CD14-positive monocyte (primary cell): ENCODE measurements at regions of chr13 and their contacts with region 1.

Region 1: DNA sequence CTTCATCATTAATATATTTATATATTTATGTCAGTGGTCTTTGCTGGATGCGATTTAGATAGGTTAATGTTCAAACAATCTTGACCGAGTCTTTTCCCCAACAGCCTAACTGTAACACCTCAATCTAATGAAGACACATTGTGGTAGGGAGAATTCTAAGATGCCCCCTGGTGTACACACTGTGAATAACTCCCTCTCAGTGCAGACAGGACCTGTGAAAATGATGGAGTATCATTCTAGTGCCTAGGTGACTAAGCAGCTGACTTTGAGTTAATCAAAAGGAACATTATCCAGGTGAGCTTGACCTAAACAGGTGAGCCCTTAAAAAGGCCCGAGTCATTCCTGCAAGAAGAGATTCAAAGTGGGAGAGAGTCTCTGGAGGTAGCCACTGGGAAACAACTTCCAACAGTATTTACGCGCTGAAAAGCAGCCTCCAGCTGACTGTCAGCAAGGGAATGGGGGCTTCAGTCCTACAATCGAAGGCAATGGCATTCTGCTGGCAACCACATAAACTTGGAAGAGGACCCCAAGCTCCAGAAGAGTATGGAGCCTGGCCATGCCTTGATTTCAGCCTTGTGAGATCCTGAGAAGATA is 28.0 kb upstream of the KBTBD7 start:
- DNase-seq: peak; percentile 28 to 51 (median 50)
- H3K4me3 ChIP-seq: no peak overlapping the region
- H3K4me3 Mint-ChIP-seq: no peak overlapping the region
- H3K27ac ChIP-seq: no peak overlapping the region
- H3K27ac Mint-ChIP-seq: no peak overlapping the region
- H3K4me1 ChIP-seq: no peaks in the 10 kb centered on the region
- H3K4me1 Mint-ChIP-seq: no peaks in the 10 kb centered on the region
- H3K27me3 ChIP-seq: no peaks in the 10 kb centered on the region
- H3K27me3 Mint-ChIP-seq: no peaks in the 10 kb centered on the region
- CTCF ChIP-seq: peak; percentile 86

Region 2: DNA sequence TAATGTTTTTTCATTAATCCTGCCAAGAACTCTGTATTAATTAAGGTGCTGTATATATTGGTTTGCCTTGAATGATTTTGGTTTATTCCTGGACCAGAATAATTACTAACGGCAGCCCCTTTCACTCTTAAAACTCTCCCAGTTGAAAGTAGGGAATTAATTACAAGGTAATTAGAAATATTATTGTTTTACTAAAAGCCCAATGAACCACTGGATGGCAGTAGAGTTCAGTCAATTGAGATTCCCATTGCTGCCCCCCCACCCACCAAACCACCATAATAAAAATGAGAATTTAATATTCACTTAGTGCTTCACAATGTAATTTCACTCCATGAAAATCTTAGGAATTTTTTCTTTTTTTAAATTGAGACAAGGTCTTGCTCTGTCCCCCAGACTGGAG is 147.3 kb before region 1 on chr13:
- intact Hi-C with region 1: loop called (anchors 2 to 10 kb)
- DNase-seq: peak in 2 of 3 donors; percentile 33 to 39
- H3K4me3 ChIP-seq: no peak overlapping the region
- H3K4me3 Mint-ChIP-seq: no peak overlapping the region
- H3K27ac ChIP-seq: no peak overlapping the region
- H3K27ac Mint-ChIP-seq: no peak overlapping the region
- H3K4me1 ChIP-seq: no peaks in the 10 kb centered on the region
- H3K4me1 Mint-ChIP-seq: no peaks in the 10 kb centered on the region
- H3K27me3 ChIP-seq: no peaks in the 10 kb centered on the region
- H3K27me3 Mint-ChIP-seq: peaks cover 0 to 1% (median 0%) of the 10 kb centered on the region in 3 donors
- CTCF ChIP-seq: peak; percentile 69

Region 3: GRCh38 chr13:41271456-41272285 is 49.3 kb after region 1 on chr13:
- intact Hi-C with region 1: no loop called
- DNase-seq: no peak
- H3K4me3 ChIP-seq: no peak overlapping the region
- H3K4me3 Mint-ChIP-seq: no peak overlapping the region
- H3K27ac ChIP-seq: no peak overlapping the region
- H3K27ac Mint-ChIP-seq: peak overlapping the region in 1 of 7 donors; percentile 63
- H3K4me1 ChIP-seq: no peaks in the 10 kb centered on the region
- H3K4me1 Mint-ChIP-seq: no peaks in the 10 kb centered on the region
- H3K27me3 ChIP-seq: no peaks in the 10 kb centered on the region
- H3K27me3 Mint-ChIP-seq: peaks cover 0 to 2% (median under 1%) of the 10 kb centered on the region in 3 donors
- CTCF ChIP-seq: no peak